GM10248 (cell line): ENCODE measurements at regions of chr10 and their contacts with region 1.

Region 1: GRCh38 chr10:5889624-5890451 is at the starts of genes ANKRD16 and FBH1:
- DNase-seq: peak; percentile 98
- CTCF ChIP-seq: no peak

Region 2: DNA sequence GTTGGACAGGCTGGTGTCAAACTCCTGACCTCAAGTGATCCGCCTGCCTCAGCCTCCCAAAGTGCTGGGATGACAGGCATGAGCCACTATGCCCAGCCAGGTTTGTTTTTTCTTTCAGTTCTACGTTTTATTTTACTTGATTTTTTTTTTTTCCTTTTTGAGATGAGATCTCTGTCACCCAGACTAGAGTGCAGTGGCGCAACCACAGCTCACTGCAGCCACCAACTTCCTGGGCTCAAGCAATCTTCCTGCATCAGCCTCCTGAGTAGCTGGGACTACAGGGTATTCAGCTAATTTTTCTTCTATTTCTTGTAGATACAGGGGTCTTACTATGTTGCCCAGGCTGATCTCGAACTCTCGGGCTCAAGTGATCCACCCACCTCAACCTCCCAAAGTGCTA is 100.9 kb before region 1 on chr10:
- CTCF ChIA-PET with region 1: no interaction called
- POLR2A ChIA-PET with region 1: no interaction called
- DNase-seq: no peak
- CTCF ChIP-seq: no peak

Region 3: GRCh38 chr10:5904227-5904626 is 14.4 kb after region 1 on chr10:
- CTCF ChIA-PET with region 1: interaction called, 6 read pairs
- POLR2A ChIA-PET with region 1: interaction called, 10 read pairs
- DNase-seq: peak; percentile 71
- CTCF ChIP-seq: no peak

Region 4: DNA sequence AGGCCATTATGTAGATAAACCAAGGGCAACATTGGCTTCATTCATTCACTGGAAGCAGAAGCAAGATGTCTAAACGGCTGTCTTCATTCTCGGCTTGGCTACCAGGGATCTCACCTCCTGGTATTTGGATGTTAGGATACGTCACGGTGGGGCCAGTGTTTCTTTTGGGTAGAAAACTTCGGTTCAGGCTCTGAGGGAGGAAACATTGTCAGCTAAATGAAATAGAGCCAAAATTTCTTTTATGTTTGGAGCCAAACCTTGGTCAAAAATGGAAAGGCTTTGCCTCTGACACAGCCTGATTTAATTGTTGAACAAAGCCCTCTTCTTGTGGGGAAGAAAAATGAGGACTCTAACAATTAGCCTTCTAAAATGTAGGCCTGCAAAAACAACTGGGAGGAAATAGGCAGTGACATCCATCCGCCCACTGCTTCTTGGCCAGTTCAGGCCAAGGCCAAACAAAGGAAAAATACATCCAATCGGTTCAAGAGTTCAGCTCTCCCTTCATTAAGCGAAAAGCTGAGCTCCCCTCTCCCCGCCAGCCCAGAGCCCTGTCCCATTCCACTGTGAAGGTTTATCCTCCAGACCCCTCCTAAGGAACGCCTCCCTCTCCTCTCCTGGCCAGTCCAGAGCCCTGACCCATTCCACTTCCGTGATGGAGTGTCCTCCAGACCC is 357.3 kb after region 1 on chr10:
- CTCF ChIA-PET with region 1: no interaction called
- POLR2A ChIA-PET with region 1: no interaction called
- DNase-seq: no peak
- CTCF ChIP-seq: no peak